GM10248 (cell line): ENCODE measurements at regions of chr21 and their contacts with region 1.

Region 1: GRCh38 chr21:31580866-31581276 is 78.6 kb upstream of the SOD1 start:
- DNase-seq: peak; percentile 63
- CTCF ChIP-seq: peak; percentile 86

Region 2: GRCh38 chr21:31098576-31099005 is 482.3 kb before region 1 on chr21:
- CTCF ChIA-PET with region 1: interaction called, 16 read pairs
- POLR2A ChIA-PET with region 1: no interaction called
- DNase-seq: peak; percentile 67
- CTCF ChIP-seq: peak; percentile 90

Region 3: GRCh38 chr21:31107871-31108270 is 473.0 kb before region 1 on chr21:
- CTCF ChIA-PET with region 1: interaction called, 15 read pairs
- POLR2A ChIA-PET with region 1: no interaction called
- DNase-seq: no peak
- CTCF ChIP-seq: no peak

Region 4: GRCh38 chr21:31198575-31198974 is 382.3 kb before region 1 on chr21:
- CTCF ChIA-PET with region 1: interaction called, 36 read pairs
- POLR2A ChIA-PET with region 1: no interaction called
- DNase-seq: peak; percentile 38
- CTCF ChIP-seq: peak; percentile 43

Region 5: GRCh38 chr21:31592963-31593560 is 12.2 kb after region 1 on chr21:
- CTCF ChIA-PET with region 1: interaction called, 14 read pairs
- POLR2A ChIA-PET with region 1: no interaction called
- DNase-seq: no peak
- CTCF ChIP-seq: no peak